HepG2 (cell line): ENCODE measurements at regions of chr5 and their contacts with region 1.

Region 1: GRCh38 chr5:160479926-160480325 is 58.3 kb downstream of the PTTG1 start:
- DNase-seq: no peak
- ATAC-seq: no peak
- H3K4me3 ChIP-seq: no peak overlapping the region
- H3K27ac ChIP-seq: no peak overlapping the region
- H3K4me1 ChIP-seq: peaks cover 80% of the 10 kb centered on the region
- H3K27me3 ChIP-seq: no peaks in the 10 kb centered on the region
- CTCF ChIP-seq: no peak
- EP300 ChIP-seq: no peak
- POLR2A ChIP-seq: no peak
- RAD21 ChIP-seq: no peak

Region 2: GRCh38 chr5:159965031-159965837 is 514.7 kb before region 1 on chr5:
- CTCF ChIA-PET with region 1: no interaction called
- POLR2A ChIA-PET with region 1: no interaction called
- in situ Hi-C with region 1: no loop called
- intact Hi-C with region 1: no loop called
- DNase-seq: peak; percentile 20
- ATAC-seq: peak; percentile 94
- H3K4me3 ChIP-seq: no peak overlapping the region
- H3K27ac ChIP-seq: no peak overlapping the region
- H3K4me1 ChIP-seq: no peaks in the 10 kb centered on the region
- H3K27me3 ChIP-seq: no peaks in the 10 kb centered on the region
- CTCF ChIP-seq: peak; percentile 61
- EP300 ChIP-seq: no peak
- POLR2A ChIP-seq: no peak
- RAD21 ChIP-seq: 0 out of 2 replicates have a peak, but pooled peaks have one; percentile 40

Region 3: GRCh38 chr5:160418561-160419457 is 61.1 kb before region 1 on chr5 and contains the start of gene SLU7:
- CTCF ChIA-PET with region 1: no interaction called
- POLR2A ChIA-PET with region 1: interaction called, 11 read pairs
- in situ Hi-C with region 1: no loop called
- intact Hi-C with region 1: loop called (anchors 2 kb)
- DNase-seq: peak; percentile 90
- ATAC-seq: peak; percentile 85
- H3K4me3 ChIP-seq: peak within 1 kb of the TSS; percentile 81 to 99 (median 96)
- H3K27ac ChIP-seq: peak within 1 kb of the TSS; percentile 80
- H3K4me1 ChIP-seq: peaks cover 47% of the 10 kb centered on the region
- H3K27me3 ChIP-seq: no peaks in the 10 kb centered on the region; a peak in 1 of 5 replicates
- CTCF ChIP-seq: no peak
- EP300 ChIP-seq: no peak
- POLR2A ChIP-seq: peak; percentile 66 to 80
- RAD21 ChIP-seq: 0 out of 2 replicates have a peak, but pooled peaks have one; percentile 13
- total RNA-seq, gene SLU7: 39.2 and 52.6 TPM in 2 replicates

Region 4: DNA sequence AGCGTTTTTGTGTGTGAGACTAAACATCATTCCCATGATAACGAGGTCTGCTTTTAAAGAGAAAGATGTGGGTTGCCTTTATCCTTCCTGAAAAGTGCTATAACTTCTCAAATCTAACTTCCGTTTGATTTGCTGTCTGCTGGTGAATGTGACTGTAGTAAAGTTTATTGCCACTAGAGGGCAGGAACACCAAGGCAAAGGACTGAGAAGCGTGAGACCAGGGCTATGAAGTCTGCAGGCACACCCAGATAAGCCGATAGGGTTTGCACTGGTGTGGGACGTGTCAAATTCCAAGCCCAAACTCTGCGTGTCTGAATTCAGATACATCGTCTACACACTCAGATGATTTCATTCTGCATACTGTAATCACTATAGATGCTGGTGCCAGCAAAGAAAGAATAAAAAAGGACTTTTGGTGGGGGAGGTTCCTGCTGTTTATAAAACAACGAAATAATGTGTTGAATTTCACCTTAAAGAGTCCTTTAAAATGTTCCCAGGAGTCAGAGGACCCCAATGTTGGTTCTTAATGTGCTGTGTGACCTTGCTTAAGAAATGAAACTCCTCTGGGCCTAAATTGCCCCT is 28.9 kb after region 1 on chr5:
- CTCF ChIA-PET with region 1: no interaction called
- POLR2A ChIA-PET with region 1: interaction called, 3 read pairs
- in situ Hi-C with region 1: no loop called
- intact Hi-C with region 1: loop called (anchors 2 kb)
- DNase-seq: peak; percentile 76
- ATAC-seq: peak; percentile 89
- H3K4me3 ChIP-seq: no peak overlapping the region
- H3K27ac ChIP-seq: no peak overlapping the region
- H3K4me1 ChIP-seq: peaks cover 52% of the 10 kb centered on the region
- H3K27me3 ChIP-seq: no peaks in the 10 kb centered on the region; a peak in 1 of 5 replicates
- CTCF ChIP-seq: peak; percentile 92
- EP300 ChIP-seq: no peak
- POLR2A ChIP-seq: no peak
- RAD21 ChIP-seq: peak; percentile 88